Esophagus muscularis mucosa (tissue), 4 donors: ENCODE measurements at regions of chr18 and their contacts with region 1.

Region 1: GRCh38 chr18:34592961-34593382 is 117.1 kb upstream of the DTNA start:
- DNase-seq: no peak
- H3K4me3 ChIP-seq: peak overlapping the region; percentile 44 to 62 (median 54)
- H3K27ac ChIP-seq: peak overlapping the region; percentile 82 to 87 (median 83)
- H3K4me1 ChIP-seq: peaks cover 6 to 38% (median 35%) of the 10 kb centered on the region in 4 donors
- H3K27me3 ChIP-seq: no peaks in the 10 kb centered on the region
- CTCF ChIP-seq: no peak
- EP300 ChIP-seq: peak; percentile 32
- POLR2A ChIP-seq: peak; percentile 25

Region 2: GRCh38 chr18:34493099-34493544 is 99.8 kb before region 1 on chr18:
- intact Hi-C with region 1: loop called (anchors 5 kb)
- DNase-seq: no peak
- H3K4me3 ChIP-seq: peak overlapping the region; percentile 63 to 80 (median 72)
- H3K27ac ChIP-seq: peak overlapping the region; percentile 85 to 89 (median 86)
- H3K4me1 ChIP-seq: peaks cover 6 to 20% (median 17%) of the 10 kb centered on the region in 4 donors
- H3K27me3 ChIP-seq: peaks cover 0 to 3% (median 0%) of the 10 kb centered on the region in 4 donors
- CTCF ChIP-seq: no peak
- EP300 ChIP-seq: no peak
- POLR2A ChIP-seq: no peak

Region 3: DNA sequence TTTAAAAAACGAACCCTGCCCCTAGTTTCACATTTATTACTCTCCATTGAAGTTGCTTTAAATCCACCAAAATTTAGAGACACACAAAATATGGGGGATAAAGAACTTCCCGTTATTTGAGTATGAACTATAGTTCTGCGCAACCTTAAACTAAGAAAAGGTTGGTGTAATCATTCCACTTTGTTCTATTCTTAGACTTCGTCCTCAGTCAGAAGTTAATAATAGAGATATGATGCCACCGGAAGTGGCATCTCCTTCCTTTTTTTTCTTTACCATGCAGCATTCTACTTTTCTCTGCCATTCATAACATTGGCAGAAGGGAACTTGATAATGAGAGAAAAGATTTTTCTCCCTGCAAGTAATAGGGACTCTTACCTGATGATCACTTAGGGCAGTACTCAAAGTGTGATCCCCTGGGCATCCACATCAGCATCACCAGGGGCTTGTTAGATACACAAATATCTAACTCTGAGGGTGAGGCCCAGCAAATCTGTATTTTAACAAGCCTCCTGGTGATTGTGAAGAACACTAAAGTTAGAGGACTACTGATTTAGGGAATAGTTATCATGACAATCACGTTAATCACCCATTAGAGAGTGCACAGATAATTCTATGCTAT is 30.6 kb before region 1 on chr18:
- intact Hi-C with region 1: loop called (anchors 2 kb)
- DNase-seq: no peak
- H3K4me3 ChIP-seq: no peak overlapping the region
- H3K27ac ChIP-seq: no peak overlapping the region
- H3K4me1 ChIP-seq: no peaks in the 10 kb centered on the region
- H3K27me3 ChIP-seq: no peaks in the 10 kb centered on the region
- CTCF ChIP-seq: no peak
- EP300 ChIP-seq: no peak
- POLR2A ChIP-seq: no peak

Region 4: DNA sequence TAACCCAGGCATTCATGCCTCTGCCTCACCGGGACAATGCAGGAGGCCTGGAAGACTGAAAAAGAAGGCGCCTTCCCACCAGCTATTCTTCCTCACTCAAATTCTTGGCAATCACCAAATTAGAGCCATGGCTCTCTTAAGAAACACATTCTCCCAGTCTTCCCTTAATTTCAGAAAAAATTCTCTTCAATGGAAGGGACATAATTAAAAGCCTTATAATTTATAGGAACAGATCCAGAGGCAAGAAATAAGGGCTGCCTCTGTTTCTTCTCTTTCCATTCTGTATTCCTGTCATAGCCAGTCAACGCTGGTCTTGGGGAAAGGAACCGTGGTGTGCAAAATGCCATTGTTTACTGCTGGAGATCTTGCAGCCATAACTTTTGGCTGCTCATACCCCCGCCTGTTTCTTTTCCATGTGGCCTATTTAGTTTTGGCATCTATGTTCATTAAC is 149.9 kb after region 1 on chr18:
- intact Hi-C with region 1: no loop called
- DNase-seq: no peak
- H3K4me3 ChIP-seq: no peak overlapping the region
- H3K27ac ChIP-seq: no peak overlapping the region
- H3K4me1 ChIP-seq: peaks cover 26 to 49% (median 29%) of the 10 kb centered on the region in 4 donors
- H3K27me3 ChIP-seq: no peaks in the 10 kb centered on the region
- CTCF ChIP-seq: no peak
- EP300 ChIP-seq: no peak
- POLR2A ChIP-seq: no peak

Region 5: GRCh38 chr18:35040988-35041814 is 448.2 kb after region 1 on chr18 and contains the start of gene MAPRE2:
- intact Hi-C with region 1: no loop called
- DNase-seq: peak; percentile 100
- H3K4me3 ChIP-seq: peak within 1 kb of the TSS; percentile 68 to 91 (median 84)
- H3K27ac ChIP-seq: peak within 1 kb of the TSS; percentile 86 to 89 (median 88)
- H3K4me1 ChIP-seq: peaks cover 35 to 53% (median 50%) of the 10 kb centered on the region in 4 donors
- H3K27me3 ChIP-seq: no peaks in the 10 kb centered on the region
- CTCF ChIP-seq: no peak
- EP300 ChIP-seq: no peak
- POLR2A ChIP-seq: peak; percentile 83
- total RNA-seq, gene MAPRE2: 22.2 to 32.2 (median 24.5) TPM